ENCODE measurements at regions of chr15 and their contacts with region 1.

Region 1: GRCh38 chr15:92097474-92098178 is 244.1 kb downstream of the SLCO3A1 start:
- DNase-seq: peak; percentile 70
- ATAC-seq: peak; percentile 63
- H3K4me3 Mint-ChIP-seq: no peak overlapping the region
- H3K27ac Mint-ChIP-seq: peak overlapping the region; percentile 54
- H3K4me1 Mint-ChIP-seq: peaks cover 58% of the 10 kb centered on the region
- H3K27me3 Mint-ChIP-seq: no peaks in the 10 kb centered on the region

Region 2: GRCh38 chr15:91885714-91886270 is 211.8 kb before region 1 on chr15:
- CTCF ChIA-PET with region 1: no interaction called
- POLR2A ChIA-PET with region 1: no interaction called
- DNase-seq: no peak
- ATAC-seq: no peak
- H3K4me3 Mint-ChIP-seq: no peak overlapping the region
- H3K27ac Mint-ChIP-seq: no peak overlapping the region
- H3K4me1 Mint-ChIP-seq: peaks cover 13% of the 10 kb centered on the region
- H3K27me3 Mint-ChIP-seq: no peaks in the 10 kb centered on the region

Region 3: GRCh38 chr15:92077353-92078085 is 20.1 kb before region 1 on chr15:
- CTCF ChIA-PET with region 1: interaction called, 26 read pairs
- POLR2A ChIA-PET with region 1: no interaction called
- DNase-seq: peak; percentile 75
- ATAC-seq: peak; percentile 75
- H3K4me3 Mint-ChIP-seq: no peak overlapping the region
- H3K27ac Mint-ChIP-seq: no peak overlapping the region
- H3K4me1 Mint-ChIP-seq: peaks cover 33% of the 10 kb centered on the region
- H3K27me3 Mint-ChIP-seq: no peaks in the 10 kb centered on the region

Region 4: GRCh38 chr15:92226014-92226612 is 128.5 kb after region 1 on chr15:
- CTCF ChIA-PET with region 1: interaction called, 13 read pairs
- POLR2A ChIA-PET with region 1: no interaction called
- DNase-seq: no peak
- ATAC-seq: no peak
- H3K4me3 Mint-ChIP-seq: no peak overlapping the region
- H3K27ac Mint-ChIP-seq: no peak overlapping the region
- H3K4me1 Mint-ChIP-seq: no peaks in the 10 kb centered on the region
- H3K27me3 Mint-ChIP-seq: peaks cover 11% of the 10 kb centered on the region

Region 5: GRCh38 chr15:92383519-92384326 is 286.1 kb after region 1 on chr15:
- CTCF ChIA-PET with region 1: interaction called, 10 read pairs
- POLR2A ChIA-PET with region 1: no interaction called
- DNase-seq: peak; percentile 46
- ATAC-seq: no peak
- H3K4me3 Mint-ChIP-seq: no peak overlapping the region
- H3K27ac Mint-ChIP-seq: no peak overlapping the region
- H3K4me1 Mint-ChIP-seq: no peaks in the 10 kb centered on the region
- H3K27me3 Mint-ChIP-seq: peaks cover 26% of the 10 kb centered on the region

Region 6: DNA sequence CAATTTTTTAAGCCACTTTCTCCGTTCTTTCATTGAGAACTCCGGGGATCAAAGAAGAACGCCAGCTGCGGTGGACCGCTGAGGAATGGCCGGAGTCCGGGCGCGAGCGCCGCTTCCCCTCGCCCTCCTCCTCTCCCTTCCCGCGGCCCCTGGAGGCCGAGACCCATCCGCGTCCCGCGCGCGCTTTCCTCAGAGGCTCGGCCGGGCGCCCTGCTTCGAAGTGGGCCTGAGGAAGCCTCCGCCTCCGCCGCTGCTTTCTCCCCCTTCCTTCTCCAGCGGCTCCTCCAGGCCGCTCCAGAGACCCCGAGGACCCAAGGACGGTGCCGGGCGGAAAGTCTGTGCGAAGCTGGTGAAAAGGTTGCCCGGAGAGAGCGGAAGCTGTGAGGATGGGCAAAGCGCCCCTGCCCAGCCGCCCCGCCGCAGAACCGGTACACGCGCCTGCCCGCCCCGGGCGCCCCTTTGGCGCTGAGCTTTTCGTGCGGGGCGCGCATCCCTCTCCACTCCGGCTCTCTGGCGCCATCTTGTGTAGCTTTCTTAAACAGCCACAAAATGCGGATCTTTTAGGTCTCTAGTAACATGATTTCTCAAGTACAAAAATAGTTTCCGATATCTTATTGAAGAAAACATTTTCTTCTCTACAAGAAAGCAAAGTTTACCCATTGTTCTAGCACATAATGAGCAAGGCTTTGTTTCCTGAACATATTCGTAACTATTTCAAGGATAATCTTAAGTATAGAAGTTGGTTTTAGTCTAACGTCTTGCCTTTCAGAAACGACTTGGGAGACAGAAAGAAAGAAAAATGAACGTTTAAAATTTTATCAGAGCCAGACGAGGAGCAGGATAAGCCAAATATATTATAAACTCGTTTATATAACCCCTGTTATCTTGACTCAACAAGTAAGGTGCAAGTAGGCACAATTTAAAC is 617.1 kb after region 1 on chr15:
- CTCF ChIA-PET with region 1: interaction called, 10 read pairs
- POLR2A ChIA-PET with region 1: no interaction called
- DNase-seq: peak; percentile 83
- ATAC-seq: peak; percentile 94
- H3K4me3 Mint-ChIP-seq: peak overlapping the region; percentile 63
- H3K27ac Mint-ChIP-seq: no peak overlapping the region
- H3K4me1 Mint-ChIP-seq: peaks cover 5% of the 10 kb centered on the region
- H3K27me3 Mint-ChIP-seq: peaks cover 15% of the 10 kb centered on the region